Posterior vena cava (tissue), 2 donors: ENCODE measurements at regions of chr9 and their contacts with region 1.

Region 1: GRCh38 chr9:14203356-14204056 is 110.4 kb downstream of the NFIB start:
- DNase-seq: no peak

Region 2: DNA sequence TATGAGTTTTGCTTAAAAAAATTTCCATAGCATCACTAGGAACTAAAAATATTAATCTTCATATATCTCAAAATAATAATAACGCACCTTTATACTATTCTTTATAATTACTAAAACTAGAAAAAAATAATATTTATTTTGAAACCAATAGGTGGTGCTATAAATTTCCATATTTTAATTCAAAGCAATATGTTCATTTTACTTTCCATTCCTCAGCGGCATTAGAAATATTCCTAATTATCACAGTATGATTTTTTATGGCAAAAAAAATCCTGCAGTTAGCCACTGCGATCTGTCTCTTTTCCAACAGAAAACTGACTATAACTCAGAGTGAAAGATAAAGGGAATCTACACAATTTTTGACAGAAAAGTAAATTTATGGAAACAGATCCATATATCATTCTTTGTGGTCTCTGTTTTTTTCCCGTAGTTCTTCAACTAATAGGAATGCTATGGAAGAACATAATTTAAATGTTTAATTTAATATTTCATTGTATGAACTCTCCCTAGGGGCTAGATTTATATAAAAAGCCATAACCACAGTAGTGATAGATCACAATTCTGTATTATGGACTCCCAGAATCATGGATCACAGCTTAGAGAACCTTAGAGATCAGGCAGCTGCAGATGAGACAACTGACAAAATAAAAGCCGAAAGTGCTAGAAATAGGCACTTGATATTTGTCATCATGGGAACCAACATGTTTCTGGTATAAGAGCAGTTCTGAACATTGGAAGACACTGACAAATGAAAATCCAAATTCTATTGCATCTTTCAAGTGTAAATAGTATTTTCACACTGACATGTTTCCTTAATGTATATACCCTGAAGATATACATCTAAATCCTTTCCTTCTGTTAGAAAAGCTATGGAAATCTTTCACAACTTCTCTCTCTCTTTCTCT is 756.3 kb before region 1 on chr9:
- intact Hi-C with region 1: loop called in 1 of 2 experiments (anchors 10 kb)
- DNase-seq: no peak

Region 3: DNA sequence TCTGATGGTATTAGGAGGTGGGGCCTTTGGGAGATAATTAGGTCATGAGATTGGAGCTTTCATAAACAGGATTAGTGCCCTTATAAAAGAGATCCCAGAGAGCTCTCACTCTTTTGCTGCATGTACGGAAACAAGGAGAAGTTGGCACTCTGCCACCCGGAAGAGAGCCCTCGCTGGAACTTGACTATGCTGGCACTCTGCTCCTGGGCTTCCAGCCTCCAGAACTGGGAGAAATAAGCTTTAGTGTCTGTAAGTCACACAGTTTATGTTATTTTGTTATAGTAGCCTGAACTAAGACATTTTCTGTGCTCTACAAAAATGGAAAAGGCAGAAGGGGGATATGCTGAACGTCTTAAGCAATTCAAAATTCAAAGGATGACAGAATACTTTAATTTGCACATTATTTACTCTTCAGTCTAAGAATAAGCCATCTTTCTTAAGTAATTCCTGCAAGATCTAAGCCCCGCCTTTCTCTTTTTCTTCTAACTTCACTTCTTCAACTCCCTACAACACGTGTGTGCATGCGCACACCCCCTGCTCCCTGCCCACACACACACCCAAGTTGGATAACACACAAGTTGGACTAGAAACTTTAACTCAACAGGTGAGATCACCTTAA is 93.1 kb after region 1 on chr9:
- intact Hi-C with region 1: loop called in 1 of 2 experiments (anchors 10 kb)
- DNase-seq: peak; percentile 79